Activated naive CD4-positive, alpha-beta T cell treated with anti-CD3 and anti-CD28 coated beads, Interleukin-2, amount 10 ng/mL, durations not matched to agents 7 days and 5 days (primary cell): ENCODE measurements at regions of chr4 and their contacts with region 1.

Region 1: GRCh38 chr4:89226665-89227574 is 80.7 kb downstream of the GPRIN3 start:
- DNase-seq: peak; percentile 86
- H3K4me3 Mint-ChIP-seq: no peak overlapping the region
- H3K27ac Mint-ChIP-seq: no peak overlapping the region
- H3K4me1 Mint-ChIP-seq: peaks cover 8% of the 10 kb centered on the region
- H3K27me3 Mint-ChIP-seq: peaks cover 7% of the 10 kb centered on the region

Region 2: DNA sequence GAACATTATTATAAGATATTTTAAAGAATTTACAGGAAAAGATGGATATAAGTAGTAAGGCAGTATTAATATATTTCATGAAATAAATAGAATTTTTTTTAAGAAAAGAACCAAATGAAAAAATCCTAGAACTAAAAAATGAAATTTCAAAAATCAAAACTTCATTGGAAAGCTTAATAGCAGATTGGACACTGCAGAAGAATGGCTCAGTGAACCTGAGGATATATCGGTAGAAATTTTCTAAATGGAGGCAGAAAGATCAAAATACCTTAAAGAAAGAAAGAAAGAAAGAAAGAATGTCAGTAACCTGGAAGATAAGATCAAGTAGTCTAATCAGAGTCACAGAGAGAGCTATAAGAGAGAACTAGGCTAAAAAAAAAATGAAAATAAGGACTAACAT is 148.6 kb before region 1 on chr4:
- CTCF ChIA-PET with region 1: no interaction called
- DNase-seq: no peak
- H3K4me3 Mint-ChIP-seq: no peak overlapping the region
- H3K27ac Mint-ChIP-seq: no peak overlapping the region
- H3K4me1 Mint-ChIP-seq: peaks cover 6% of the 10 kb centered on the region
- H3K27me3 Mint-ChIP-seq: no peaks in the 10 kb centered on the region

Region 3: GRCh38 chr4:89353514-89353913 is 126.6 kb after region 1 on chr4:
- CTCF ChIA-PET with region 1: interaction called, 10 read pairs
- DNase-seq: no peak
- H3K4me3 Mint-ChIP-seq: no peak overlapping the region
- H3K27ac Mint-ChIP-seq: no peak overlapping the region
- H3K4me1 Mint-ChIP-seq: no peaks in the 10 kb centered on the region
- H3K27me3 Mint-ChIP-seq: peaks cover 17% of the 10 kb centered on the region

Region 4: DNA sequence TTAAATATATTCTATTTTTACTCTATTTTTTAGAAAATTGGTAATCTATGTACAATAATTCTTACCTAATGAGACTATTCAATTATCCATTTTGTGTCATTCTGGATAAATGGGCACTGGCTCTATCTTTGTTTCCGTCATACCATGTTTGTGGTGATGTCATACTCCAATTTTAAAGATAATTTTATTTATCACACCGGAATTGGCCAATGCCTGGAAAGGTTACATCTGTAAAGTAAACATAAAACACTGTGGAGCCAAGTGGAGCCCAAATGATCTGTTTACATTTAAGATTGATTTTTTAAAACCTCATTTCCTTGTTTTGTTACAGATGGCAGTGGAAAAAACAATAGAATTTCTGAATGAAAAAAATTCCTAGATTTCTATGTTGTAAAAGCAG is 200.8 kb after region 1 on chr4:
- CTCF ChIA-PET with region 1: interaction called, 101 read pairs
- DNase-seq: no peak
- H3K4me3 Mint-ChIP-seq: no peak overlapping the region
- H3K27ac Mint-ChIP-seq: no peak overlapping the region
- H3K4me1 Mint-ChIP-seq: no peaks in the 10 kb centered on the region
- H3K27me3 Mint-ChIP-seq: no peaks in the 10 kb centered on the region

Region 5: DNA sequence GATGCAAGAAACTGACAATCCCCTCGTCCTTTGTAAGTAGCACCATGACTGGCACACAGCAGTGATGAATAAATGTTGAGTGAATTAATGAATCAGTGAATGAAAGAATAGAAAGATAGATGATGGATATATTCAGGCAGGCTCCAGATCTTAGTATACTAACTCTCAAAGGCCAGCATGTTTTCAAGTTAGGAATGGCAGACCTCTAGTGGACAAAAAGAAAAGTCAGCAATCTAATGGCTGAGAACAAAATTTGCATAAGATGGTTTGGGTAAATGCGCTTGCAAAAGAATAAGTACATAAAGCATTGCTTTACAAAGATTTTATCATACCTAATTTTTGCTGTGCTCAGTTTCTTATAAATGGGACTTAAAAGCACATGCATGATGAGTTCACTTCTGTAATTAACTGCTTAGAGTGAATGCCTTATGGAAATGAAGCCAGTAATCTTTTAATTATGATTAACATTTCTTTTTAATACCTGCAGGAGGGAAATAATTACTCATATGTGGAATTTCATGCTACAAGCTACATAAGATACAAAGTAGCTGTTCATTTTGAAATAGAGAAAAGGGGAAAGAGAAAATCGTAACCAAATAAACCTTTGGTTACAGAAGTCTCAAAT is 207.6 kb after region 1 on chr4:
- CTCF ChIA-PET with region 1: interaction called, 101 read pairs
- DNase-seq: no peak
- H3K4me3 Mint-ChIP-seq: no peak overlapping the region
- H3K27ac Mint-ChIP-seq: no peak overlapping the region
- H3K4me1 Mint-ChIP-seq: peaks cover 20% of the 10 kb centered on the region
- H3K27me3 Mint-ChIP-seq: peaks cover 4% of the 10 kb centered on the region

Region 6: DNA sequence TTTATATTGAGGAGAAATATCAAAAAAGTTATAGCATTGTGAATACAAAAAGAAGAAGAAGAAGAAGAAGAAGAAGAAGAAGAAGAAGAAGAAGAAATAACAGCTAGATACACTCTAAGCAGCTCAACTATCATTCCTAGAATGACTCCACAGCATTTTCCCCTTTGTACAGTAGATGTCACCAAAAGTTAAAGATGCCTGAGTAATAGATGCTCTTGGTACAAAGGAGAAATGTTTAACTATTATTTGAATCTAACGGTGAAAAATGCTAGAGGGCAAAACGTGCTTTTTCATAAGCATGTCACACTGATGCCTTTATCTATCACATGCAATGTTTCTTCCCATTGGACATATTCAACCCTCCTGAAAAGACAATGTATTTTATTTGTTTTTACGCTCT is 259.1 kb after region 1 on chr4:
- CTCF ChIA-PET with region 1: interaction called, 16 read pairs
- DNase-seq: no peak
- H3K4me3 Mint-ChIP-seq: no peak overlapping the region
- H3K27ac Mint-ChIP-seq: no peak overlapping the region
- H3K4me1 Mint-ChIP-seq: peaks cover 2% of the 10 kb centered on the region
- H3K27me3 Mint-ChIP-seq: peaks cover 8% of the 10 kb centered on the region